IMR-90 (cell line): ENCODE measurements at regions of chr12 and their contacts with region 1.

Region 1: GRCh38 chr12:57069523-57069922 is 9.1 kb downstream of the NEMP1 start:
- DNase-seq: peak; percentile 87
- ATAC-seq: peak; percentile 99
- H3K4me3 ChIP-seq: no peak overlapping the region
- H3K27ac ChIP-seq: peak overlapping the region; percentile 70
- H3K4me1 ChIP-seq: peaks cover 3% of the 10 kb centered on the region
- H3K27me3 ChIP-seq: no peaks in the 10 kb centered on the region
- CTCF ChIP-seq: peak; percentile 91
- POLR2A ChIP-seq: no peak; the same call in 1 of the 2 replicates
- RAD21 ChIP-seq: peak; percentile 96

Region 2: GRCh38 chr12:56751712-56752598 is 317.6 kb before region 1 on chr12 and contains the start of gene PRIM1:
- CTCF ChIA-PET with region 1: no interaction called
- POLR2A ChIA-PET with region 1: no interaction called
- dilution Hi-C with region 1: no loop called
- in situ Hi-C with region 1: loop called (anchors 10 kb)
- intact Hi-C with region 1: loop called (anchors 5 kb)
- DNase-seq: peak; percentile 66
- ATAC-seq: peak; percentile 95
- H3K4me3 ChIP-seq: peak within 1 kb of the TSS; percentile 82
- H3K27ac ChIP-seq: peak within 1 kb of the TSS; percentile 68
- H3K4me1 ChIP-seq: no peaks in the 10 kb centered on the region
- H3K27me3 ChIP-seq: no peaks in the 10 kb centered on the region
- CTCF ChIP-seq: no peak
- POLR2A ChIP-seq: no peak
- RAD21 ChIP-seq: no peak
- total RNA-seq, gene PRIM1: 12.0 and 15.3 TPM in 2 replicates

Region 3: GRCh38 chr12:57088459-57089248 is 19.1 kb after region 1 on chr12 and contains the start of gene NAB2:
- CTCF ChIA-PET with region 1: interaction called, 6 read pairs
- POLR2A ChIA-PET with region 1: no interaction called
- dilution Hi-C with region 1: no loop called
- in situ Hi-C with region 1: no loop called
- intact Hi-C with region 1: loop called (anchors 1 kb)
- DNase-seq: peak; percentile 97
- ATAC-seq: peak; percentile 50
- H3K4me3 ChIP-seq: peak within 1 kb of the TSS; percentile 98
- H3K27ac ChIP-seq: peak within 1 kb of the TSS; percentile 99
- H3K4me1 ChIP-seq: peaks cover 32% of the 10 kb centered on the region
- H3K27me3 ChIP-seq: no peaks in the 10 kb centered on the region
- CTCF ChIP-seq: no peak
- POLR2A ChIP-seq: peak; percentile 86
- RAD21 ChIP-seq: no peak
- total RNA-seq, gene NAB2: 68.3 and 68.8 TPM in 2 replicates

Region 4: DNA sequence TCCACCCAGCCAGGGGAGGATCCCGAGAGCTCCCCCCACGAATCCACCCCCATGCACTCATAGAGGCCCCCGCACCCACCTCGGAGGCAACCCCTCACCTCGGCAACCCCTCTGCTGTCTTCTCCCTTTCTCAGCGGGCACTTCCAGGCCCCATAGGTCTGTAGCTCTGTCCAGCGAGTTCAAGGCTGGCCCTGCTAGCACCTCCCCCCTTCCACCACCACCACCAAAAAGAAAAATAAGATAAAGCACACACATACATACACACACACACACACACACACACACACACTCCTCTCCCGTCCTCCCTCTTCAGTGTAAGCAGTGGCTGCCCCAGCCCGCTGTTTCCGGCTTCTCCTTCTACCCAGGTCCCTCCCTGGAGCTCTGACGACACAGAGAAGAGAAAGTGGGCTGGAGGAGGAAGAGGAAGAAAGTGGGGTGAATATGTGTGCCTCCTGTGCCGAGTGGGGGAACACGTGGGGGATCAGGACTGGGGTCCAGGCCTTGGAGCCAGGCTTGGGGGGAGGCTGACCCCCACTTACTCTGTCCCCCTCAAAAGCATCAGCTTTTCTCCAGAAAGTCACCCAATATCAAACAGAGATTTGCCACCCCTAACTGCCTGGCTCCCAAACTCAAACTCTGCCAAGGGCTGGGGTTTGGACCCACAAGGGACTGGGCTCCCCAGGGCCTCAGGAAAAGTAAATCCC is 41.7 kb after region 1 on chr12 and contains the start of gene STAT6:
- CTCF ChIA-PET with region 1: interaction called, 24 read pairs
- POLR2A ChIA-PET with region 1: interaction called, 12 read pairs
- dilution Hi-C with region 1: no loop called
- in situ Hi-C with region 1: loop called (anchors 5 kb)
- intact Hi-C with region 1: loop called (anchors 1 kb)
- DNase-seq: peak; percentile 87
- ATAC-seq: peak; percentile 68
- H3K4me3 ChIP-seq: peak within 1 kb of the TSS; percentile 64
- H3K27ac ChIP-seq: peak within 1 kb of the TSS; percentile 94
- H3K4me1 ChIP-seq: 0 out of 2 replicates have a peak, but pooled peaks cover 2% of the 10 kb centered on the region
- H3K27me3 ChIP-seq: no peaks in the 10 kb centered on the region
- CTCF ChIP-seq: no peak
- POLR2A ChIP-seq: peak; percentile 72
- RAD21 ChIP-seq: no peak
- total RNA-seq, gene STAT6: 38.9 and 43.4 TPM in 2 replicates

Region 5: DNA sequence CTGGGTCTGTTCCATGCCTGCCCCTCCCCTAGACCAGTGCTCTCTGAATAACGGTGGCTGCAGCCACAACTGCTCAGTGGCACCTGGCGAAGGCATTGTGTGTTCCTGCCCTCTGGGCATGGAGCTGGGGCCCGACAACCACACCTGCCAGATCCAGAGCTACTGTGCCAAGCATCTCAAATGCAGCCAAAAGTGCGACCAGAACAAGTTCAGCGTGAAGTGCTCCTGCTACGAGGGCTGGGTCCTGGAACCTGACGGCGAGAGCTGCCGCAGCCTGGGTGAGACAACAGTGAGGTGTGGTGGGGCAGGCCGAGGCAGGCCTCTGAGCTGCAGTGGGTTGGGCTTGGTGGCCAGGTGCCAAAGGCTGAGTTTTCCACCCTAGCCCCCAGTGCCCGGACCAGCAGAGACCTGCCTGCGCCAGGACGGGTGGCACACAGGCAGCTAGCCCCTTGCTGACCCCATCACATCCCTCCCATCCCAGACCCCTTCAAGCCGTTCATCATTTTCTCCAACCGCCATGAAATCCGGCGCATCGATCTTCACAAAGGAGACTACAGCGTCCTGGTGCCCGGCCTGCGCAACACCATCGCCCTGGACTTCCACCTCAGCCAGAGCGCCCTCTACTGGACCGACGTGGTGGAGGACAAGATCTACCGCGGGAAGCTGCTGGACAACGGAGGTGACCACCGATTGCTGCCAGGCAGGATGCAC is 106.1 kb after region 1 on chr12:
- CTCF ChIA-PET with region 1: interaction called, 5 read pairs
- POLR2A ChIA-PET with region 1: interaction called, 3 read pairs
- dilution Hi-C with region 1: no loop called
- in situ Hi-C with region 1: loop called (anchors 5 kb)
- intact Hi-C with region 1: loop called (anchors 2 kb)
- DNase-seq: peak; percentile 71
- ATAC-seq: peak; percentile 55
- H3K4me3 ChIP-seq: no peak overlapping the region
- H3K27ac ChIP-seq: no peak overlapping the region
- H3K4me1 ChIP-seq: peaks cover 8% of the 10 kb centered on the region
- H3K27me3 ChIP-seq: no peaks in the 10 kb centered on the region
- CTCF ChIP-seq: peak; percentile 66
- POLR2A ChIP-seq: no peak
- RAD21 ChIP-seq: peak; percentile 71

Region 6: DNA sequence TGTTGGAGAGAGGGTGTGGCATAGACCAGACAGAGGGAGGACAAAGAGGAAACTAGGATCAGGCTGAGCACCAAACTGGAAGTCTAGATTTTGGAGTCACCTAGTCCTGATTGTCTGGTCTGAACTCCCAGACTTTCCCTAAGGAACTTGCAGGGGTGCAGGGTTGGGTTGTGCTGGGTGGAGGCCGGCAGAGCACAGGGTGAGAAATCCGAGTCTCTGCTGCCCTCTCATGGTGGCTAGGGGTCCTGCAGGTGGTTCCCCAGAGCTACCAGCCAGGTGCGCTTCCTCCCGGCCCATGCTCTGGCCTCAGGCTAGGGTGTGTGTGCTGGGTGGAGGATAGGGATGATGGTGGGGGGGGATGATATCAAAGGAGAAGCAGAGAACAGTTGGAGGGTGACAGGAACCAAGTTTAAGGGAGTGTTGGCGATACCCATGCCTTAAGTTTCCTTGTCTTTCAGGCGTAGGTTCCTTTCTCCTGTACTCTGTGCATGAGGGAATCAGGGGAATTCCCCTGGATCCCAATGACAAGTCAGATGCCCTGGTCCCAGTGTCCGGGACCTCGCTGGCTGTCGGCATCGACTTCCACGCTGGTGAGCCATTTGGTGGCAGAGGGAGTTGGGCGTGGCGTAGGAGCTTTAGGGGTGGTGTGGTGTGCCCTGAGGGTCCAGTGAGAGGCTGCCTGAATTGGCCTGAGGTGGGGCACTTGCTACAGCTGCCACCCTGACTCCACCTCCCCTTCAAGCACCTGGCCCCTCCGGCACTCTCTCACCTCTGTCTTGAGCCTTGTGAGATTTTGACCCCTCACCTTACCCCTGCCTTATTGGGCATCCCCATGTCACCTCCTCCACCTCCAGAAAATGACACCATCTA is 113.6 kb after region 1 on chr12:
- CTCF ChIA-PET with region 1: no interaction called
- POLR2A ChIA-PET with region 1: no interaction called
- dilution Hi-C with region 1: no loop called
- in situ Hi-C with region 1: loop called (anchors 5 kb)
- intact Hi-C with region 1: loop called (anchors 1 kb)
- DNase-seq: peak; percentile 59
- ATAC-seq: peak; percentile 89
- H3K4me3 ChIP-seq: no peak overlapping the region
- H3K27ac ChIP-seq: no peak overlapping the region
- H3K4me1 ChIP-seq: no peaks in the 10 kb centered on the region
- H3K27me3 ChIP-seq: no peaks in the 10 kb centered on the region
- CTCF ChIP-seq: peak; percentile 78
- POLR2A ChIP-seq: no peak
- RAD21 ChIP-seq: peak; percentile 81

Region 7: GRCh38 chr12:57238854-57239554 is 169.5 kb after region 1 on chr12:
- CTCF ChIA-PET with region 1: interaction called, 4 read pairs
- POLR2A ChIA-PET with region 1: no interaction called
- dilution Hi-C with region 1: no loop called
- in situ Hi-C with region 1: no loop called
- intact Hi-C with region 1: loop called (anchors 5 kb)
- DNase-seq: peak; percentile 82
- ATAC-seq: peak; percentile 82
- H3K4me3 ChIP-seq: peak overlapping the region; percentile 55
- H3K27ac ChIP-seq: peak overlapping the region; percentile 73
- H3K4me1 ChIP-seq: peaks cover 17% of the 10 kb centered on the region
- H3K27me3 ChIP-seq: peaks cover 6% of the 10 kb centered on the region; the same call in 1 of the 2 replicates
- CTCF ChIP-seq: peak; percentile 100
- POLR2A ChIP-seq: no peak
- RAD21 ChIP-seq: peak; percentile 91